ENCODE measurements at regions of chr9 and their contacts with region 1.

Region 1: GRCh38 chr9:123235448-123235847 is 32.9 kb downstream of the STRBP start:
- DNase-seq: no peak
- ATAC-seq: no peak
- H3K4me3 ChIP-seq: no peak overlapping the region
- H3K4me3 Mint-ChIP-seq: no peak overlapping the region
- H3K27ac ChIP-seq: no peak overlapping the region
- H3K27ac Mint-ChIP-seq: no peak overlapping the region
- H3K4me1 ChIP-seq: peaks cover 0 to 3% of the 10 kb centered on the region in 2 experiments
- H3K4me1 Mint-ChIP-seq: peaks cover 15 to 38% (median 31%) of the 10 kb centered on the region in 3 donors
- H3K27me3 ChIP-seq: no peaks in the 10 kb centered on the region
- H3K27me3 Mint-ChIP-seq: no peaks in the 10 kb centered on the region

Region 2: GRCh38 chr9:123033864-123034601 is 201.4 kb before region 1 on chr9:
- CTCF ChIA-PET with region 1: no interaction called
- POLR2A ChIA-PET with region 1: no interaction called
- DNase-seq: peak in 4 of 35 experiments; percentile 0 to 5 (median 4)
- ATAC-seq: no peak
- H3K4me3 ChIP-seq: no peak overlapping the region
- H3K4me3 Mint-ChIP-seq: no peak overlapping the region
- H3K27ac ChIP-seq: no peak overlapping the region
- H3K27ac Mint-ChIP-seq: no peak overlapping the region
- H3K4me1 ChIP-seq: no peaks in the 10 kb centered on the region
- H3K4me1 Mint-ChIP-seq: peaks cover 4 to 18% (median 6%) of the 10 kb centered on the region in 3 donors
- H3K27me3 ChIP-seq: no peaks in the 10 kb centered on the region
- H3K27me3 Mint-ChIP-seq: no peaks in the 10 kb centered on the region

Region 3: DNA sequence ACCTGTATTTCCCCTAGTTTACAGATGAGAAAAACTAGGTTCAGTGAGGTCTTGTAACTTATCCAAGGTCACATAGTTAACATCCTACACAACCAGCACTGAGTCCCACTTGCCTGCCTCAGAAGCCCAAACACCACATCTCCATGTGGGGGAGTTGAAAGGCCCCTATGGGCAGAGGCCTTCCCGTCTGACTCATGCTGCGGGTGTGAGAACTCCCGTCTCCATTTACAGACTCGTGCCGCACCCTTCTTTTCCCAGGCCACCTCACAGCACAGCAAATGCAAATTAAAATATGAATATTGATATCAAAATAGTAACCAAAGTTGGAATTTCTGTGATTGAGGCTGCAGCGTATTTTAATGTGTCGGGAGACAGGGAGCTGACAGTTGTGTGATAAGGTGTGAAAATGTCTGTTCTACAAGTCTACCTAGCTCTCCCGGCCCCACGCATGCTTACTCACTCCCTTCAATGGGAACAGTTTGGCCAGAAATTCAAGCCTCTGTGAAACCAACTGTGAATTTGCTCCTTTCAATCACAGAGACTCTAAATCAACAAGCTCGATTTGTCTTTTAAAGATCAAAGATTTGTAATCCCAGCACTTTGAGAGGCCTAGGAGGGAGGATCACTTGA is 210.6 kb after region 1 on chr9:
- CTCF ChIA-PET with region 1: no interaction called
- POLR2A ChIA-PET with region 1: interaction called in 1 of 2 experiments, 10 read pairs
- DNase-seq: peak in 1 of 35 experiments; percentile 9
- ATAC-seq: no peak
- H3K4me3 ChIP-seq: no peak overlapping the region
- H3K4me3 Mint-ChIP-seq: no peak overlapping the region
- H3K27ac ChIP-seq: no peak overlapping the region
- H3K27ac Mint-ChIP-seq: no peak overlapping the region
- H3K4me1 ChIP-seq: no peaks in the 10 kb centered on the region
- H3K4me1 Mint-ChIP-seq: no peaks in the 10 kb centered on the region
- H3K27me3 ChIP-seq: no peaks in the 10 kb centered on the region
- H3K27me3 Mint-ChIP-seq: no peaks in the 10 kb centered on the region